ENCODE measurements at regions of chr5 and their contacts with region 1.

Region 1: GRCh38 chr5:154683101-154683880 is 71.9 kb upstream of the LARP1 start:
- DNase-seq: no peak
- H3K4me3 ChIP-seq: peak overlapping the region in 2 of 4 donors; percentile 32 to 56
- H3K27ac ChIP-seq: peak overlapping the region; percentile 16 to 87 (median 48)
- H3K4me1 ChIP-seq: peaks cover 0 to 16% of the 10 kb centered on the region in 2 donors
- H3K27me3 ChIP-seq: no peaks in the 10 kb centered on the region
- CTCF ChIP-seq: no peak
- POLR2A ChIP-seq: no peak

Region 2: GRCh38 chr5:154740483-154740882 is 57.2 kb after region 1 on chr5:
- intact Hi-C with region 1: loop called in 1 of 2 experiments (anchors 10 kb)
- DNase-seq: peak in 6 of 7 donors; percentile 64 to 89 (median 78)
- H3K4me3 ChIP-seq: no peak overlapping the region
- H3K27ac ChIP-seq: peak overlapping the region in 4 of 5 donors; percentile 14 to 55 (median 27)
- H3K4me1 ChIP-seq: peaks cover 6 to 25% of the 10 kb centered on the region in 2 donors
- H3K27me3 ChIP-seq: no peaks in the 10 kb centered on the region
- CTCF ChIP-seq: no peak
- POLR2A ChIP-seq: no peak

Region 3: GRCh38 chr5:154801083-154801482 is 117.8 kb after region 1 on chr5:
- intact Hi-C with region 1: loop called in 1 of 2 experiments (anchors 10 kb)
- DNase-seq: no peak
- H3K4me3 ChIP-seq: no peak overlapping the region
- H3K27ac ChIP-seq: no peak overlapping the region
- H3K4me1 ChIP-seq: no peaks in the 10 kb centered on the region
- H3K27me3 ChIP-seq: no peaks in the 10 kb centered on the region
- CTCF ChIP-seq: no peak
- POLR2A ChIP-seq: no peak